Mammary epithelial cell (primary cell): ENCODE measurements at regions of chr19 and their contacts with region 1.

Region 1: GRCh38 chr19:24054549-24054935 is 32.4 kb upstream of the ZNF254 start:
- DNase-seq: peak; percentile 93
- H3K4me3 ChIP-seq: no peak overlapping the region
- H3K27ac ChIP-seq: peak overlapping the region; percentile 79
- H3K4me1 ChIP-seq: peaks cover 31% of the 10 kb centered on the region
- H3K27me3 ChIP-seq: no peaks in the 10 kb centered on the region
- CTCF ChIP-seq: no peak

Region 2: DNA sequence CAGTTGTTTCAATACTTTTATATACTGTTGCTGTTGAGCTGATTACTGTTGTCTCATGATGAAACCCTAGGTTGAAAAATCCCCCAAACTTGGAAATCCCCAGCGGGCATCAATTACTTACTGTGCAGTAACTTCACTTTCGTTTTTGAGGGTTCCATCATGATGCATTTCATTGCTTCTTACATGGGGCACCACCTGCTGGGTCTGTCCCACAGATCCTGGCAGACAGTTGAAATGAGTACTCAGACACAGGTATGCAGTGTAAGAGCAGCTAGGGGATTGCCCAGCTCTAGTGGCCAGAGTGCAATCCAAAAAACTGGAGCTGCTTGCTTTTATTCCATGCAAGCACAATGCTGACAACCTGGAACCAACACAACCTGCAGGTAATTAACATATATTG is 526.7 kb before region 1 on chr19:
- CTCF ChIA-PET with region 1: no interaction called
- dilution Hi-C with region 1: no loop called
- in situ Hi-C with region 1: loop called (anchors 25 kb)
- intact Hi-C with region 1: loop called (anchors 10 kb)
- DNase-seq: peak; percentile 35
- H3K4me3 ChIP-seq: no peak overlapping the region
- H3K27ac ChIP-seq: no peak overlapping the region
- H3K4me1 ChIP-seq: peaks cover 5% of the 10 kb centered on the region
- H3K27me3 ChIP-seq: no peaks in the 10 kb centered on the region
- CTCF ChIP-seq: no peak

Region 3: DNA sequence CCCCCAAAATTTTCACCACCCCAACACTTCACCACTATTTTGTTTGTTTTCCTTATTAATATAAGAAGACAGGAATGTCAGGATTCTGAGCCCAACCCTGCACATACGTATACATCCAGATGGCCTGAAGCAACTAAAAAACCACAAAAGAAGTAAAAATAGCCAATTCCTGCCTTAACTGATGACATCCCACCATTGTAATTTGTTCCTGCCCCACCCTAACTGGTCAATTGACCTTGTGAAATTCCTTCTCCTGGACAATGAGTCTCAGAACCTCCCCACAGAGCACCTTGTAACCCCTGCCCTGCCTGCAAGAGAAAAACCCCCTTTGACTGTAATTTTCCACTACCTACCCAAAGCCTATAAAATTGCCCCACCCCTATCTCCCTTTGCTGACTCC is 500.0 kb before region 1 on chr19:
- CTCF ChIA-PET with region 1: no interaction called
- dilution Hi-C with region 1: no loop called
- in situ Hi-C with region 1: loop called (anchors 25 kb)
- intact Hi-C with region 1: loop called (anchors 10 kb)
- DNase-seq: peak; percentile 95
- H3K4me3 ChIP-seq: no peak overlapping the region
- H3K27ac ChIP-seq: peak overlapping the region; percentile 97
- H3K4me1 ChIP-seq: peaks cover 22% of the 10 kb centered on the region
- H3K27me3 ChIP-seq: no peaks in the 10 kb centered on the region
- CTCF ChIP-seq: no peak

Region 4: DNA sequence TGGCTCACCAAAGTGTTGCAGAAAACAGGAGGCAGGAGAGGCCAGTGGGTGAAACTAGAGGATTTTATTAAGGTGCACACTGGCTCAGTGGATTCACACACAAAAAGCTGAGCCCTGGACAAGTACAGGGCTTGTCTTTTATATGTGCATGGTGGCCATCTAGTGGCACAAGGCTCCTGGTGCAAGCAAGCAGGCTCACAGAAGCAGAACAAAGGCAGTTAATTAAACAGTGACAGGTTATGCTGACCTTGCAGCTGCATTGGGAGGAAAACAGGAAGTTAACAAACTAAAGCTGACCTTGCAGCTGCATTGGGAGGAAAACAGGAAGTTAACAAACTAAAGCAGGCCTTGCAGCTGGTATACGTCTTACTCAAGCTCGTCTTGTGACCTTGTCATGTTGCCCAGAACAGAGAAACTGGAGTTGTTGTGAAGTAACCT is 230.6 kb before region 1 on chr19:
- CTCF ChIA-PET with region 1: no interaction called
- dilution Hi-C with region 1: no loop called
- in situ Hi-C with region 1: no loop called
- intact Hi-C with region 1: no loop called
- DNase-seq: peak; percentile 30
- H3K4me3 ChIP-seq: no peak overlapping the region
- H3K27ac ChIP-seq: no peak overlapping the region
- H3K4me1 ChIP-seq: no peaks in the 10 kb centered on the region
- H3K27me3 ChIP-seq: no peaks in the 10 kb centered on the region
- CTCF ChIP-seq: no peak

Region 5: DNA sequence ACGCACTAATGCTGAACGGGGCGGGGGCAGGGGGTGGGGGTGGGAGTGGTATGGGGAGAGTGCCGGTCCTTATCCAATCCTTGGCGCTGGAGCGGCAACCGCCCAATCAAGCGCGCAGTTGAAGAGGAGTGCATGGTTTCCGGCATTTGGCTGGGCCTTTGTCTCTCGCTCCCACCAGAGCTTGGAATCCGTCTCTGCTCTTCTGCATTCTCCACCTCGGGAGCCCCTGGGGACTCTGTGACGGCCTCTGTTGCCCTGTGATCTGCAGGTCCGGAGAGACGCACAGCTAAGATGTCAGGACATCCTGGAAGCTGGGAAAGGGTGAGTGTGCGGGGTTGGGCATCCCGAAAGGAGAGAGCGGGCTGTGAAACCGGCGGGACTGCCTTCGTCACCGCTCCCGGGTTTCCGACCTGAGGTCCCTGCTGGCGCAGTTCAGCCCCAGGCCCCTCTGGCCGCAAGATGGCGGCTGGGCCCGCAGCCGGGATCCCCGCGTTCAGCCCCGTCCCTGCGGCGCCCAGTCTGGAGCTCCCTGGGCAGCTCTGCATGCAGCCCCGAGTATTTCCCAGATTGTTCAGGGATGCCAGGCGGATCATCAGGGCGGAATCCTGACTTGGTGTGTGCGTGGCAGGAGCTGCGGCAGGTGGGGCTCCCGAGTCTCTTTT is 21.1 kb before region 1 on chr19:
- CTCF ChIA-PET with region 1: no interaction called
- dilution Hi-C with region 1: no loop called
- in situ Hi-C with region 1: no loop called
- intact Hi-C with region 1: loop called (anchors 1 kb)
- DNase-seq: peak; percentile 91
- H3K4me3 ChIP-seq: peak overlapping the region; percentile 78 to 88 (median 80)
- H3K27ac ChIP-seq: peak overlapping the region; percentile 90
- H3K4me1 ChIP-seq: peaks cover 8% of the 10 kb centered on the region
- H3K27me3 ChIP-seq: no peaks in the 10 kb centered on the region
- CTCF ChIP-seq: no peak

Region 6: DNA sequence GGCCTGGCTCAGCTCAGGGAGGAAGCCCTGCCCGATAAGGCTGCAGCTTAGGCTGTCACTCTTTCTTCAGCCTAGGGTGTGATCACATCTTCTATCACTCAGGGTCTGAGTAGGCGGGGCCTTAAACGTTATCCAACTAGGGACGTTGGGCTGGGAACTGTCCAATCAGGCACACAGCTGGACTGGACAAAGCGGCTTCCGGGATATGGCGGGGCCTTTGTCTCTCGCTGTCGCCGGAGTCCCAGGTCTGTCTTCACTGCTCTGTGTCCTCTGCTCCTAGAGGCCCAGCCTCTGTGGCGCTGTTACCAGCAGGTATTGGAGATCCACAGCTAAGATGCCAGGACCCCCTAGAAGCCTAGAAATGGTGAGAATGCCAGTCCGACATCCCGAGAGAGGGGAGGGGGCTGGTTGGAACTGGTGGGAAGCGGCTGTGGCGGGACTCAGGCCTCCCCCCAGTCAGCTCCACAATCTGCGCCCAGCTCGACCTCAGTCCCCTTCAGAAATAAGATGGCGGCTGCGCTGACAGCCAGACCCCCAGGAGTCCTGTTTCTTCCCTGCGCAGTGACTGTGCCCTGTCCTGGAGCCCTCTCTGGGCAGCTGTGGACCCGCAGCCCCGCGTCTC is 32.5 kb after region 1 on chr19 and contains the start of gene ZNF254:
- CTCF ChIA-PET with region 1: no interaction called
- dilution Hi-C with region 1: no loop called
- in situ Hi-C with region 1: no loop called
- intact Hi-C with region 1: loop called (anchors 1 kb)
- DNase-seq: peak; percentile 91
- H3K4me3 ChIP-seq: peak within 1 kb of the TSS; percentile 74 to 88 (median 78)
- H3K27ac ChIP-seq: peak within 1 kb of the TSS; percentile 87
- H3K4me1 ChIP-seq: no peaks in the 10 kb centered on the region
- H3K27me3 ChIP-seq: no peaks in the 10 kb centered on the region
- CTCF ChIP-seq: no peak
- total RNA-seq, gene ZNF254: 7.4 to 18.3 TPM